Ascending aorta (tissue), 2 donors: ENCODE measurements at regions of chr7 and their contacts with region 1.

Region 1: GRCh38 chr7:159015454-159016410 is 128.9 kb downstream of the VIPR2 start:
- DNase-seq: peak; percentile 25 to 93
- H3K4me3 ChIP-seq: no peak overlapping the region
- H3K27ac ChIP-seq: peak overlapping the region; percentile 91 to 96
- H3K4me1 ChIP-seq: peaks cover 11 to 59% of the 10 kb centered on the region in 2 donors
- H3K27me3 ChIP-seq: no peaks in the 10 kb centered on the region
- CTCF ChIP-seq: peak in 1 of 3 experiments; percentile 6

Region 2: DNA sequence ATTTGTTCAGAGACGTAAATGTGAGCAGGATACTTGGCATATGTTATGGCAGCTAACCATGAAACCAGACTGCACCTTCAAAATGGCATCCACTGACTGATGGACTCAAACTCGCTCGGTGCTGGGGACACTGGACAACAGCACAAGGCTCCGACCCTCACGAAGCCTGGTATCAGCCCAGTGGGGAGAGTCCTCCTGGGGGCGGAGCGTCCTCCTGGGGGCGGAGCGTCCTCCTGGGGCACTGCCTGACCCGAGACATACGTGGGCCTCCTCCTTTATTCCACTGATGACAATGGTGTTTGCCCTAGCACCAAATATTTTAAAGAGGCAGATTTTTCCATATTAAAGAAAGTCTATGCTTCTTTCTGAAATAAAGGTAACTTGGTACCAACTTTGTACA is 225.9 kb before region 1 on chr7:
- intact Hi-C with region 1: loop called (anchors 5 kb)
- DNase-seq: no peak
- H3K4me3 ChIP-seq: no peak overlapping the region
- H3K27ac ChIP-seq: peak overlapping the region in 1 of 2 donors; percentile 29
- H3K4me1 ChIP-seq: peaks cover 4 to 14% of the 10 kb centered on the region in 2 donors
- H3K27me3 ChIP-seq: no peaks in the 10 kb centered on the region
- CTCF ChIP-seq: no peak

Region 3: DNA sequence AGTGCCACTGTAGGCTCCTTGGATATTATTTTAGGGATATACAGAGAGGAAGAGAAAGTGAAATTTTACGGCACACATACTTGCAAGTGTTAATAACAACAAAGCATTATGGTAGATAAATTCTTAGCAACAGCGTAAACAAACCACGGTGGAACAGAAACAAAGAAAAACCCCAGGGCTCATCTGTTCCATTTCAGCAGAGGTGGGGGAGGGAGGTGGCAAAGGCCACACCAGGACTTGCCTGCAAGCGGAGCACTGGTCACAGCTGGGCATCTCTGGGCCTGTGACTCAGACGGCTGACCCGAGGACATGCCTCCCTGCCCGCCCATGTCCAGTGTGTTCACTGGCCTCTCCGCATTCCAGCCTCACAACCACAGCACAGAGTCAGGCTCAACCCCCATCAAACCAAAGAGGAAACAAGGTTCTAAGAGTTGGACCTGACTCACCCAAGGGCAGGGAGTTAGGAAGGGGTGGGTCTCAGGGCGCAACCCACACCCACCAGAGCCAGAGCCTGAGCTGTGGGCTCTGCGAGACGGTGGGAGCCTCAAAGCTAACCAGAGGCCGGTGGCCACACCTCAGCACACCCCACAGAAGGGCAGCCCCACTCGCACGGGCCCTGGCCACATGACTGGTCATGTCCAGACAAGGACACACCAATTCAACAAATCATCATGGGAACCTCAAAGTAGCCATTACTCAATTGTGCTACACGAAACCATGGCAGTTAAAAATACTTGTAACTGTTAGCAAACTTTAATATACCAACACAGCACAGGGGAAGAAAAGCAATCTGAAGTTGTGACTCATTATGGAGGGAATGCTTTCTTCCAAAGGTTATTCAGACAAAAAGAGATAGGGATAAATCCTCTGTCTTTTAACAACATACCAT is 197.2 kb before region 1 on chr7:
- intact Hi-C with region 1: loop called (anchors 10 kb)
- DNase-seq: peak; percentile 86 to 97
- H3K4me3 ChIP-seq: peak overlapping the region; percentile 41 to 57
- H3K27ac ChIP-seq: peak overlapping the region; percentile 89 to 95
- H3K4me1 ChIP-seq: peaks cover 33 to 75% of the 10 kb centered on the region in 2 donors
- H3K27me3 ChIP-seq: no peaks in the 10 kb centered on the region
- CTCF ChIP-seq: no peak

Region 4: DNA sequence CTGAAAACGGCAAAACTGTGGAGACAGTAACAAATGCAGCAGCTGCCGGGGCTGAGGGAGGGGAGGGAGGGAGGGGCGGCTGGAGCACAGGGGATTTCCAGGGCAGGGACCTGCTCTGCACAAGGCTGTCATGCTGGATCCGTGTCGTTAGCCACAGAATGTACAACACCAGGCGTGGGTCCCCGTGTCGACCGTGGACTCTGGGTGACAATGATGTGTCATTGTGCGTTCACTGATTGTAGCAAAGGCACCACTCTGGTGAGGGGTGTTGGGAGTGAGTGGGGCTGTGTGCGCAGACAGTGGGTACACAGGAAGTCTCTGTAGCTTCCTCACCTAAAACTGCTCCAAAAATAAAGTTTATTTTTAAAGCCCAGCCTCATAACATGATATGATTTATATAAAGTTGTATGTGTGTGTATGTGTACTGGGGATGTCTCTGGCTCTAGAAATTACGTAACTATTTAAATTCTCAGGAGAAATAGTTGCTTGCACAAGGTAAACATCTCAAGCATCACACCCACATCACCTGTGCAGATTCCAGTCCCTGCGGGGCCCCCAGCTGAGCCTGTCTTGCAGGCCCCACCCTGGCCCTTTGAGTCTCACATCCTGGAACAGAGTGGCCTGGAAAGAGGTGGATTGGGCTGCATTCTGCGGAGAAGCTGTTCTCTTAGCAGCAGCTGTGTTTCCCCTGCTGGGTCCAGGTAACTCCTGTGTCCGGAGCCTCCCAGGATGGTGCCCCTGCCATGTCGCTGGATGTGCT is 23.7 kb before region 1 on chr7:
- intact Hi-C with region 1: no loop called
- DNase-seq: no peak
- H3K4me3 ChIP-seq: no peak overlapping the region
- H3K27ac ChIP-seq: no peak overlapping the region
- H3K4me1 ChIP-seq: no peaks in the 10 kb centered on the region
- H3K27me3 ChIP-seq: no peaks in the 10 kb centered on the region
- CTCF ChIP-seq: no peak

Region 5: DNA sequence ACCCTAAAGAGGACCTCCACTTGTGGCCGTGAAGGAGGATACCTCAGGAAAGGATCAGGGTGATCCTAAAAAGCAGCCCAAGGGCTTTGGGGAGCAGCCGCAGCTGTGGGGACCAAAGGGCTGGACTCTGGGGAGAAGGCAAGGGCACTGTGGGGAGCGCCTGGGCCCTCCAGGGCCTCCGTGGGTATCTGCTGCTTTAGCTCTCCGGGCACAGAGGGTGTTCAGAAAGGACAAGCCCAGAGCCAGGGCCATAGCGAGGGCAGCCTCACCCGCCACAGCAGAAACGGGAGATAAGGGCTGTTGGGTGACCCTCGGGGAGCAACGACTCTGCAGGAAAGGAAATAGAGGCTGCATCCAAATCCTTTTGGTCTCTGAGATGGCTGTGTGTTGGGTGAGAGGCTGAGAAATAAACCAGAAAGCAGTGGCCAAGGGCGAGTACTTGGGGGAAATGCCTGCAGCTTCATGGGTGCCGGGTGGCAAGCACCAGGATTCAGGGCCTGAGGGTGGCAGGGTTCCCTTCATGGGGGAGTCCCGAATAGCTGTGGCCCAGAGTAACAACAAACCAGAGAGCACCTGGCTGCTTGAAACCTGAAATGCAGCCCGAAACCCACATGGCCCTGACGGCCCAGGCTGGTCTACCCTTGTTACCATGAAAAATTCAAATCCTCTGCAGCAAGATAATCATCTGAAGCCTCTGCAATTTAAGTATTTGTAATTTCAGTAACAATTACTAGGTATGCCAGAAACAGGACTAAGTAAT is 33.7 kb after region 1 on chr7:
- intact Hi-C with region 1: no loop called
- DNase-seq: peak in 1 of 2 donors; percentile 21
- H3K4me3 ChIP-seq: no peak overlapping the region
- H3K27ac ChIP-seq: no peak overlapping the region
- H3K4me1 ChIP-seq: no peaks in the 10 kb centered on the region
- H3K27me3 ChIP-seq: no peaks in the 10 kb centered on the region
- CTCF ChIP-seq: no peak

Region 6: DNA sequence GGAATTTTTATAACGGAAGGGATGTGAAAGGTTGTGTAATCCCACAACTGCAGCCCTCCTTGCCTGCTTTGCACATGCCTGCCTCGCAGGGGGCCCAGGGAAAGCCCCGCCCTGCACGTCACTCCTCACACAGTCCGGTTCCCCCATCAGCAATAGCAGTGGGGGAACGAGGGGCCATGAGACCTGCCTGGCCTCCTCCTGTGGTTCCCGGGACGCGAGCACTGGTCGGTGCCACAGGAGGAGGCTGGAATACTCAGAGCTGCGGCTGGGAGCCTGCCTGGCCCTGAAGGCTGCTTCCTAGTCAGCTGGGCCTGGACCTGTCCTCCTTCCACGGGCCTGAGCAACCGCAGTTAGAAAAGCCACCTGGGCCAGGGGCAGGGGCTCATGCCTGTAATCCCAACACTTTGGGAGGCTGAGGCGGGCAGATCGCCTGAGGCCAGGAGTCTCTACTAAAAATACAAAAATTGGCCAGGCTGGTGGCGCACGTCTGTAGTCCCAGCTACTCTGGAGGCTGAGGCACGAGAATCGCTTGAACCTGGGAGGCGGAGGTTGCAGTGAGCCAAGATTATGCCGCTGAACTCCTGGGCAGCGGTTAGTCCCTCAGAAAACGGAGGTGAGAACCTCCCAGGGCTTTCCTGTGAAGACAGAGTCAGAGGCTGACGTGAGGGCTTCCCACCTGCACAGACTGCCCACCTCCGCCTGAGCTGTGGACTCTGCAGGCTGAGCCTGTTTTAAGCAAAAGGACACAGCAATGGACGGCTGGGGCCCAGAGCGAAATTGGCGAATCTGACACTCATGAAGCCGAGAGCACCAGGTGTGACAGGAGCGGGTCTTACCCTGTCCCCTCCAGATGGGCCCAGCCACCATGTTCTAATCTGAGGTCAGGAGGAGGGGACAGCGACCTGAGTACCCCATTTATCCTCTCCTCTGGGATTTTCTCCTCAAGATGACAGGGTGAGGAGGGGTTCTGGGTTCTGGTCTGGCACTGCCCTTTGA is 76.0 kb after region 1 on chr7:
- intact Hi-C with region 1: loop called (anchors 2 kb)
- DNase-seq: peak in 1 of 2 donors; percentile 66
- H3K4me3 ChIP-seq: no peak overlapping the region
- H3K27ac ChIP-seq: peak overlapping the region; percentile 98 to 99
- H3K4me1 ChIP-seq: peaks cover 28 to 48% of the 10 kb centered on the region in 2 donors
- H3K27me3 ChIP-seq: no peaks in the 10 kb centered on the region
- CTCF ChIP-seq: no peak